ENCODE measurements at regions of chr10 and their contacts with region 1.

Region 1: GRCh38 chr10:767211-767610 is 77.7 kb upstream of the DIP2C start:
- DNase-seq: no peak
- H3K4me3 ChIP-seq: no peak overlapping the region
- H3K27ac ChIP-seq: no peak overlapping the region
- H3K4me1 ChIP-seq: no peaks in the 10 kb centered on the region
- H3K27me3 ChIP-seq: no peaks in the 10 kb centered on the region
- CTCF ChIP-seq: no peak
- POLR2A ChIP-seq: no peak

Region 2: DNA sequence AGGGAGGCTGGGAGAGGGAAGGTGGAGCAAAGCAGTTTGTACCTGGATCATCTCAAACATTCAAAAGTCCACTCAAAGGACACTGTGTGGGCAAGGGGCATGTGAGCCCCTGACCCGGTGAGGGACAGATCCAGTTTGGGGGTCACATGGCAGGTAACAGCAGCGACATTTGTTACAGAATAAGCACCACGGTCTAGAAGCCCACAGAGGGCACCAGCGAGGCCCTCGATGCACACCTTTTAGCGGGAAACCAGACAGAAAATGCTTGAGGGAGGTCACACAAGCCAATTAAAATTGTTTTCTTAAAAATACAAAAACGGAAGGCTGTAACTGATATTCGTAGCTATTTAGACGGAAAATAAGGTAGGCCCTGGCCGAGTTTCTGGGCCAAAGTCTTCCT is 487.6 kb before region 1 on chr10:
- intact Hi-C with region 1: loop called (anchors 5 kb)
- DNase-seq: no peak
- H3K4me3 ChIP-seq: no peak overlapping the region
- H3K27ac ChIP-seq: no peak overlapping the region
- H3K4me1 ChIP-seq: no peaks in the 10 kb centered on the region
- H3K27me3 ChIP-seq: no peaks in the 10 kb centered on the region
- CTCF ChIP-seq: no peak
- POLR2A ChIP-seq: no peak

Region 3: DNA sequence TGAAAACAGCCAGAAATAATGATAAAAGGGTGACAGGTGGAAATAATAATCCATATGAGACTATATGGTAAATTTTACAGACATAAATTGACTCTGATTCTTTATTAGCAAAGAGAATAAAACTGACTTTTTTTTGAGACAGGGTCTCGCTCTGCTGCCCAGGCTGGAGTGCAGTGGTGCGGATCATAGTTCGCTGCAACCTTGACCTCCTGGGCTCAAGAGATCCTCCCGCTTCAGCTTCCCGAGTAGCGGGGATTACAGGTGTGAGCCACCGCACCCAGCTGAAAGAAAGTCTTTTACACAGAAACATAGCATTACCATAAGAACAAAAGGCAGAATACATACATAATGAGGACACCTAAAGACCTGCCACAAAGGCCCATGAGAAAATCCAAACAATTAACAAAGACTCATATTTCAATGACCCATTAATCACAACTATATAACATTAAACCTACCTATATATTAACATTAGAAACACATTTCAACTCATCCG is 26.2 kb before region 1 on chr10:
- intact Hi-C with region 1: loop called (anchors 2 kb)
- DNase-seq: no peak
- H3K4me3 ChIP-seq: no peak overlapping the region
- H3K27ac ChIP-seq: no peak overlapping the region
- H3K4me1 ChIP-seq: no peaks in the 10 kb centered on the region
- H3K27me3 ChIP-seq: no peaks in the 10 kb centered on the region
- CTCF ChIP-seq: no peak
- POLR2A ChIP-seq: no peak

Region 4: GRCh38 chr10:804191-804781 is 37.1 kb after region 1 on chr10:
- intact Hi-C with region 1: no loop called
- DNase-seq: no peak
- H3K4me3 ChIP-seq: no peak overlapping the region
- H3K27ac ChIP-seq: no peak overlapping the region
- H3K4me1 ChIP-seq: peaks cover 5% of the 10 kb centered on the region
- H3K27me3 ChIP-seq: no peaks in the 10 kb centered on the region
- CTCF ChIP-seq: no peak
- POLR2A ChIP-seq: no peak

Region 5: GRCh38 chr10:836778-837177 is 69.6 kb after region 1 on chr10:
- intact Hi-C with region 1: no loop called
- DNase-seq: no peak
- H3K4me3 ChIP-seq: no peak overlapping the region
- H3K27ac ChIP-seq: no peak overlapping the region
- H3K4me1 ChIP-seq: peaks cover 12% of the 10 kb centered on the region
- H3K27me3 ChIP-seq: no peaks in the 10 kb centered on the region
- CTCF ChIP-seq: no peak
- POLR2A ChIP-seq: no peak